Naive thymus-derived CD8-positive, alpha-beta T cell (primary cell): ENCODE measurements at regions of chr19 and their contacts with region 1.

Region 1: DNA sequence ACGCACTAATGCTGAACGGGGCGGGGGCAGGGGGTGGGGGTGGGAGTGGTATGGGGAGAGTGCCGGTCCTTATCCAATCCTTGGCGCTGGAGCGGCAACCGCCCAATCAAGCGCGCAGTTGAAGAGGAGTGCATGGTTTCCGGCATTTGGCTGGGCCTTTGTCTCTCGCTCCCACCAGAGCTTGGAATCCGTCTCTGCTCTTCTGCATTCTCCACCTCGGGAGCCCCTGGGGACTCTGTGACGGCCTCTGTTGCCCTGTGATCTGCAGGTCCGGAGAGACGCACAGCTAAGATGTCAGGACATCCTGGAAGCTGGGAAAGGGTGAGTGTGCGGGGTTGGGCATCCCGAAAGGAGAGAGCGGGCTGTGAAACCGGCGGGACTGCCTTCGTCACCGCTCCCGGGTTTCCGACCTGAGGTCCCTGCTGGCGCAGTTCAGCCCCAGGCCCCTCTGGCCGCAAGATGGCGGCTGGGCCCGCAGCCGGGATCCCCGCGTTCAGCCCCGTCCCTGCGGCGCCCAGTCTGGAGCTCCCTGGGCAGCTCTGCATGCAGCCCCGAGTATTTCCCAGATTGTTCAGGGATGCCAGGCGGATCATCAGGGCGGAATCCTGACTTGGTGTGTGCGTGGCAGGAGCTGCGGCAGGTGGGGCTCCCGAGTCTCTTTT is 53.6 kb upstream of the ZNF254 start:
- DNase-seq: peak; percentile 69 to 92 (median 82)
- ATAC-seq: peak; percentile 98 to 99
- H3K4me3 Mint-ChIP-seq: peak overlapping the region; percentile 97 to 100 (median 99)
- H3K27ac Mint-ChIP-seq: peak overlapping the region; percentile 96 to 100 (median 99)
- H3K4me1 Mint-ChIP-seq: peaks cover 14 to 56% (median 50%) of the 10 kb centered on the region in 4 donors
- H3K27me3 Mint-ChIP-seq: no peaks in the 10 kb centered on the region

Region 2: GRCh38 chr19:23273590-23274413 is 759.6 kb before region 1 on chr19:
- POLR2A ChIA-PET with region 1: interaction called, 15 read pairs
- DNase-seq: peak; percentile 81 to 95 (median 90)
- ATAC-seq: peak; percentile 97 to 98
- H3K4me3 Mint-ChIP-seq: peak overlapping the region; percentile 95 to 99 (median 97)
- H3K27ac Mint-ChIP-seq: peak overlapping the region; percentile 89 to 99 (median 98)
- H3K4me1 Mint-ChIP-seq: peaks cover 9 to 44% (median 35%) of the 10 kb centered on the region in 4 donors
- H3K27me3 Mint-ChIP-seq: no peaks in the 10 kb centered on the region

Region 3: GRCh38 chr19:23395041-23395721 is 638.3 kb before region 1 on chr19 and contains the start of gene ZNF91:
- POLR2A ChIA-PET with region 1: interaction called, 14 read pairs
- DNase-seq: peak; percentile 77 to 97 (median 92)
- ATAC-seq: peak; percentile 94 to 95
- H3K4me3 Mint-ChIP-seq: peak within 1 kb of the TSS; percentile 93 to 99 (median 96)
- H3K27ac Mint-ChIP-seq: peak within 1 kb of the TSS; percentile 94 to 99 (median 99)
- H3K4me1 Mint-ChIP-seq: peaks cover 11 to 44% (median 36%) of the 10 kb centered on the region in 4 donors
- H3K27me3 Mint-ChIP-seq: no peaks in the 10 kb centered on the region
- polyA plus RNA-seq, gene ZNF91: 44.2 to 53.8 (median 51.7) TPM

Region 4: DNA sequence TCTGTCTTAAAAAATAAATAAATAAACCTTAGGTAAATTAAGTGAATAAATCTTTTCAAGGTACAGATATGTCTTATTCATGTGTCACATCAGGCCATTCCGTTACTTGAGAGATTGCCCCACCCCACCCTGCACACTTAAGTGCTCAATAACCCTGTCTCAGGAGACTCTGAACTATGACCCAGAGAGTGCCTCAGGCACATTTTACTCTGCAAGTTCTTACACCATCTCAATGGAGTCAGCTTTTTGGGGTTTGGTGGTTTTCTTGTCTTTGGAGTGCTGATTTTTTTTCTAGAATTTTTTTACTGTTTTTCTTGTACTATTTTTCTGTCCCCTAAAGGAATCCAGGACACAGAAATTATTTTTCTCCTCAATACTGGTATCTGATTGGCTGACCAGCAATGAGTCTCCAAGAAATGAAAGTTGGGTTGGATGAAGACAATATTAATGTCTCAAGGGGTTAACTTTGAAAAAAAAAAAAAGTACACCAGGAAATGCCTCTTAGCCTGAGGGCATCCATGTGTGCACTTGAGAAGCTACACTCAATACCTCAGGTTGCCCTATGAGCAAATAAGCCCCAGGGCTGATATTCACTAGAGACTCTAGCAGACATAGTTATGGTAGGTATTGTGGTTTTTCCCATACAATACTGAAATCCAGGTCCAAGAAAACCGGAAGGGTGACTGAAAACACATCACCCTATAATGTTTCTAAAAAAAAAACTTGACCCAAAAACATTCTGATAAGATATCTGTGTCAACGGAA is 523.6 kb before region 1 on chr19:
- POLR2A ChIA-PET with region 1: no interaction called
- DNase-seq: no peak
- ATAC-seq: no peak
- H3K4me3 Mint-ChIP-seq: no peak overlapping the region
- H3K27ac Mint-ChIP-seq: no peak overlapping the region
- H3K4me1 Mint-ChIP-seq: no peaks in the 10 kb centered on the region
- H3K27me3 Mint-ChIP-seq: no peaks in the 10 kb centered on the region

Region 5: GRCh38 chr19:23686621-23687423 is 346.6 kb before region 1 on chr19 and contains the start of gene ZNF675:
- POLR2A ChIA-PET with region 1: interaction called, 10 read pairs
- DNase-seq: peak; percentile 72 to 95 (median 88)
- ATAC-seq: peak; percentile 92 to 94
- H3K4me3 Mint-ChIP-seq: peak within 1 kb of the TSS; percentile 97 to 100 (median 99)
- H3K27ac Mint-ChIP-seq: peak within 1 kb of the TSS; percentile 97 to 100 (median 99)
- H3K4me1 Mint-ChIP-seq: peaks cover 15 to 62% (median 45%) of the 10 kb centered on the region in 4 donors
- H3K27me3 Mint-ChIP-seq: no peaks in the 10 kb centered on the region
- polyA plus RNA-seq, gene ZNF675: 16.3 to 18.5 (median 18.1) TPM

Region 6: GRCh38 chr19:23914402-23915301 is 118.8 kb before region 1 on chr19 and contains the start of gene ZNF726:
- POLR2A ChIA-PET with region 1: interaction called, 17 read pairs
- DNase-seq: peak; percentile 67 to 94 (median 87)
- ATAC-seq: peak; percentile 98 to 99
- H3K4me3 Mint-ChIP-seq: peak within 1 kb of the TSS; percentile 91 to 97 (median 94)
- H3K27ac Mint-ChIP-seq: peak within 1 kb of the TSS; percentile 75 to 96 (median 94)
- H3K4me1 Mint-ChIP-seq: peaks cover 0 to 24% (median 20%) of the 10 kb centered on the region in 4 donors
- H3K27me3 Mint-ChIP-seq: no peaks in the 10 kb centered on the region
- polyA plus RNA-seq, gene ZNF726: 1.5 to 3.8 (median 2.0) TPM

Region 7: GRCh38 chr19:24086974-24087595 is 53.7 kb after region 1 on chr19 and contains the start of gene ZNF254:
- POLR2A ChIA-PET with region 1: interaction called, 17 read pairs
- DNase-seq: peak; percentile 49 to 89 (median 76)
- ATAC-seq: peak; percentile 96 to 97
- H3K4me3 Mint-ChIP-seq: peak within 1 kb of the TSS; percentile 92 to 97 (median 96)
- H3K27ac Mint-ChIP-seq: peak within 1 kb of the TSS; percentile 94 to 99 (median 98)
- H3K4me1 Mint-ChIP-seq: peaks cover 5 to 20% (median 11%) of the 10 kb centered on the region in 4 donors
- H3K27me3 Mint-ChIP-seq: no peaks in the 10 kb centered on the region
- polyA plus RNA-seq, gene ZNF254: 5.0 to 8.0 (median 5.4) TPM